ENCODE measurements at regions of chr2 and their contacts with region 1.

Region 1: GRCh38 chr2:127067620-127068350 is 39.2 kb downstream of the BIN1 start:
- H3K4me3 ChIP-seq: no peak overlapping the region
- H3K27ac ChIP-seq: no peak overlapping the region
- H3K4me1 ChIP-seq: peaks cover 2% of the 10 kb centered on the region; the same call in 1 of the 2 replicates
- CTCF ChIP-seq: peak; percentile 86

Region 2: GRCh38 chr2:127080938-127081755 is 13.4 kb after region 1 on chr2:
- CTCF ChIA-PET with region 1: interaction called, 12 read pairs
- POLR2A ChIA-PET with region 1: no interaction called
- H3K4me3 ChIP-seq: no peak overlapping the region
- H3K27ac ChIP-seq: no peak overlapping the region
- H3K4me1 ChIP-seq: no peaks in the 10 kb centered on the region
- CTCF ChIP-seq: no peak

Region 3: GRCh38 chr2:127174136-127174535 is 106.4 kb after region 1 on chr2:
- CTCF ChIA-PET with region 1: interaction called, 10 read pairs
- POLR2A ChIA-PET with region 1: no interaction called
- H3K4me3 ChIP-seq: no peak overlapping the region
- H3K27ac ChIP-seq: no peak overlapping the region
- H3K4me1 ChIP-seq: no peaks in the 10 kb centered on the region
- CTCF ChIP-seq: no peak

Measured in HEK293 (cell line).